ENCODE measurements at regions of chr5 and their contacts with region 1.

Region 1: DNA sequence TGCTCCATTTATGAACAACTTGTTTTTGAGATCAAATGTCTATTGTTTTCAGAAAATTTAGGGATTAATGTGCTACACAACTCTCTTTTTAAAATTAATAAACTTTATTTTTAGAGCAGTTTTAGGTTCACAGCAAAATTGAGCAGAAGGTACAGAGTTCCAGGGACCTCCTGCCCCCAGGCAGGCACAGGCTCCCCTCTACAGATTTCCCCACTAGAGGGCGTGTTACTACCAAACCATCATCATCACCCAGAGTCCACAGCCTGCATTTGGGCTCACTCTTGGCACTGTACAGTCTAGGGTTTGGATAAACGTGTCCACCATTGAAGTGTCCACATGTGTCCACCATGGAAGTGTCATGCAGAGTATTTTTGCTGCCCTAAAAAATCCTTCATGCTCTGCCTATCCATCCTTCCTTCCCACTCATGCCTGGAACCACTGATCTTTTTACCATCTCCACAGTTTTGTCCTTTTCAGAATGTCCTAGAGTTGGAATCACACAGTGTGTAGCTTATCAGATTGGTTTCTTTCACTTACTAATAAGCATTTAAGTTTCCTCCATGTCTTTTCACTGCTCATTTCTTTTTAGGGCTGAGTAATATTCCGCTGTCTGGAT is 61.7 kb downstream of the MRPL36 start:
- DNase-seq: no peak
- H3K4me3 ChIP-seq: no peak overlapping the region
- H3K27ac ChIP-seq: no peak overlapping the region
- H3K4me1 ChIP-seq: no peaks in the 10 kb centered on the region
- H3K27me3 ChIP-seq: no peaks in the 10 kb centered on the region
- CTCF ChIP-seq: peak; percentile 68

Region 2: DNA sequence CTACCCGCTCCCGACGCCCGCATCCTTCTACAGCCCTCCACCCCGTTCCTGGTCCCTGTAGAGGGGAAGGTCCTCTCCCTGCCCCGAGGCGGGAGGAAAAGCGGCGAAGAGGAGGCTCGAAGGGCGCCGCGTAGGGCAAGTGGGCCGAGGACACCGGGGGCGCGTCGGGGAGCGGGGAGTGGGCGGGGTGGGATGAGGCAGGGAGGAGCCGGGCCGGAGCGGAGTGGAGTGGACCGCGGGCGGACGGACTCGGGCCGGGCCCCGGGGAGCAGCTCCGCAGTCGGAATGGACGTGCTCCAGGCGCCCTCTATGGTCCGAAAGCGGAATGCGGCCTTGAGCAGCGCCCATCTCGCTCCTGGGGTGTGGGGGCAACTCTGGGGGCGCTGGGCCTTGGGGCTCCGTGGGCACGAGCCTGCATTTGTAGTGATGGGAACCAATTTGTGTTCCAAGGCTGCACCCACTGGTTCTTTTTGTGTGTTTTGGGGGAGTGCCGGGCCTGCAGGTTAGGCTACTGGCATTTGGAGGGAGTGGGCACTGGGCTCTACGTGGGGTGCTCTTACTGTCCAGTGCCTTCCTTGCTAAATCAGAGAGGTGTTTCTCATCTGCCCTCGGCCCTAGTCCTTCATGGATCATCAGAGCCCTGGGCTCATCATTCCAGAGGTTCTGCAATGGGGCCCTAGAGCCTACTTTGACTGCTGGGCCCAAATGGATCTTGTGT is 1865.0 kb after region 1 on chr5:
- intact Hi-C with region 1: loop called (anchors 10 kb)
- DNase-seq: no peak
- H3K4me3 ChIP-seq: no peak overlapping the region
- H3K27ac ChIP-seq: no peak overlapping the region
- H3K4me1 ChIP-seq: no peaks in the 10 kb centered on the region
- H3K27me3 ChIP-seq: peaks cover 50% of the 10 kb centered on the region
- CTCF ChIP-seq: no peak

Measured in colonic mucosa (tissue), 4 donors.